ENCODE measurements at regions of chr12 and their contacts with region 1.

Region 1: GRCh38 chr12:54840317-54840771 is 14.0 kb upstream of the MUCL1 start:
- DNase-seq: no peak
- H3K4me3 ChIP-seq: no peak overlapping the region
- H3K27ac ChIP-seq: no peak overlapping the region
- H3K4me1 ChIP-seq: no peaks in the 10 kb centered on the region
- H3K27me3 ChIP-seq: no peaks in the 10 kb centered on the region
- CTCF ChIP-seq: no peak
- POLR2A ChIP-seq: no peak

Region 2: DNA sequence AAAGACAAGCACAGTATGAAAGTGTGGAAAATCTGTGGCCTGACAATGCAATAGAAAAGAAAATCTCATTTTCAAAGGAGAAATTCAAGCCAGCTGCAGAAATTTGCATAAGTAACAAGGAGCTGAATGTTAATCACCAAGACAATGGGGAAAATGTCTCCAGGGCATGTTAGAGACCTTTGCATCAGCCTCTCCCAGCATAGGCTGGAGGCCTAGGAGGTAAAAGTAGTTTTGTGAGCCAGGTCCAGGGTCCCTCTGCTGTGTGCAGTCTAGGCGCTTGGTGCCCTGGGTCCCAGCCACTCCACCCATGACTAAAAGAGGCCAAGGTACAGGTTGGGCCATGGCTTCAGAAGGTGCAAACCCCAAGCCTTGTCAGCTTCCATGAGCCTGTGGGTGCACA is 85.9 kb after region 1 on chr12:
- intact Hi-C with region 1: no loop called
- DNase-seq: no peak
- H3K4me3 ChIP-seq: no peak overlapping the region
- H3K27ac ChIP-seq: no peak overlapping the region
- H3K4me1 ChIP-seq: no peaks in the 10 kb centered on the region
- H3K27me3 ChIP-seq: no peaks in the 10 kb centered on the region
- CTCF ChIP-seq: no peak
- POLR2A ChIP-seq: no peak

Region 3: GRCh38 chr12:55492078-55492477 is 651.7 kb after region 1 on chr12 and contains the start of gene OR6C68:
- intact Hi-C with region 1: loop called (anchors 10 kb)
- DNase-seq: no peak
- H3K4me3 ChIP-seq: no peak within 1 kb of the TSS
- H3K27ac ChIP-seq: no peak within 1 kb of the TSS
- H3K4me1 ChIP-seq: no peaks in the 10 kb centered on the region
- H3K27me3 ChIP-seq: no peaks in the 10 kb centered on the region
- CTCF ChIP-seq: no peak
- POLR2A ChIP-seq: no peak
- total RNA-seq, gene OR6C68: not detected

Region 4: GRCh38 chr12:56425193-56425592 is 1584.8 kb after region 1 on chr12:
- intact Hi-C with region 1: no loop called
- DNase-seq: no peak
- H3K4me3 ChIP-seq: no peak overlapping the region
- H3K27ac ChIP-seq: no peak overlapping the region
- H3K4me1 ChIP-seq: no peaks in the 10 kb centered on the region
- H3K27me3 ChIP-seq: no peaks in the 10 kb centered on the region
- CTCF ChIP-seq: no peak
- POLR2A ChIP-seq: no peak

Measured in breast epithelium (tissue), 4 donors.